CD4-positive, alpha-beta T cell (primary cell): ENCODE measurements at regions of chr16 and their contacts with region 1.

Region 1: GRCh38 chr16:23452572-23453337 is at the start of gene COG7:
- DNase-seq: peak; percentile 74 to 88 (median 78)
- ATAC-seq: peak; percentile 89
- H3K4me3 ChIP-seq: peak within 1 kb of the TSS; percentile 93
- H3K4me3 Mint-ChIP-seq: peak within 1 kb of the TSS; percentile 94
- H3K27ac ChIP-seq: peak within 1 kb of the TSS in 1 of 2 donors; percentile 13
- H3K27ac Mint-ChIP-seq: peak within 1 kb of the TSS; percentile 79
- H3K4me1 ChIP-seq: peaks cover 15% of the 10 kb centered on the region
- H3K4me1 Mint-ChIP-seq: peaks cover 40% of the 10 kb centered on the region
- H3K27me3 ChIP-seq: no peaks in the 10 kb centered on the region
- H3K27me3 Mint-ChIP-seq: no peaks in the 10 kb centered on the region
- CTCF ChIP-seq: no peak
- total RNA-seq, gene COG7: 12.6 to 13.6 TPM

Region 2: DNA sequence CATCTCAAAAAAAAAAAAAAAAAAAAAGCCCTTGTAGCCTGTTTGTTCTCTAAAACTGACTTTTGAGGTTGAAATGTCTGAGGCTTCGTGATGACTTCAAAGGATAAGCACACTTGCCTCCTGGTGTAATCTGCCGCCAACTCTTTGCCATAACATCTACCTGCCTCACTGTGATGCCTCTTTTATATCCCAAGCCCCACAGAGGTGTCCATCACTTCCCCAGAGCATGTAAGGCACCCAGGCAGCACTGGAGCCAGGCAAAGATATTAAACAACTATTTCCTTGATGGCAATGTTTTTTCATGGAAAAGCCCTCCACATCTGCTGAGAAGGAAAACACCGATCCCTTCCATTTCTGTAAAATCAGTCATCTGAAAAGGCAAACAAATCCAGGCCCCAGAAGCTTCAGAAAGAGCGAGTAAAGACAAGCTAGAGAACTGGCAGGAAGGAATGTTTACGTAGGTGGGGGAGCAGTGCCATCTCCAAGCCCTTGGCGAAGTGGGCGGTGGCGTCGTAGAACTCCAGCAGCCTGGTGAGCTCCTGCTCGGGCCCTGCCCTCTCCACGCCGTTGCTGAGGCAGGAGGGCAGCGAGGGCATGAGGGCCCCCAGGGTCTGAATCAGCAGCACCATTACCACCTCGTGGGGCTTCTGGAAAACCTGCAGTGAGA is 28.3 kb before region 1 on chr16:
- CTCF ChIA-PET with region 1: no interaction called
- POLR2A ChIA-PET with region 1: no interaction called
- intact Hi-C with region 1: no loop called
- DNase-seq: no peak
- ATAC-seq: no peak
- H3K4me3 ChIP-seq: no peak overlapping the region
- H3K4me3 Mint-ChIP-seq: no peak overlapping the region
- H3K27ac ChIP-seq: no peak overlapping the region
- H3K27ac Mint-ChIP-seq: no peak overlapping the region
- H3K4me1 ChIP-seq: no peaks in the 10 kb centered on the region
- H3K4me1 Mint-ChIP-seq: no peaks in the 10 kb centered on the region
- H3K27me3 ChIP-seq: no peaks in the 10 kb centered on the region
- H3K27me3 Mint-ChIP-seq: no peaks in the 10 kb centered on the region
- CTCF ChIP-seq: no peak

Region 3: GRCh38 chr16:23504451-23505179 is 51.9 kb after region 1 on chr16:
- CTCF ChIA-PET with region 1: no interaction called
- POLR2A ChIA-PET with region 1: no interaction called
- intact Hi-C with region 1: loop called (anchors 5 to 10 kb)
- DNase-seq: peak; percentile 23 to 84 (median 49)
- ATAC-seq: peak; percentile 80
- H3K4me3 ChIP-seq: no peak overlapping the region
- H3K4me3 Mint-ChIP-seq: peak overlapping the region; percentile 70
- H3K27ac ChIP-seq: peak overlapping the region; percentile 26 to 40
- H3K27ac Mint-ChIP-seq: peak overlapping the region; percentile 79
- H3K4me1 ChIP-seq: peaks cover 65% of the 10 kb centered on the region
- H3K4me1 Mint-ChIP-seq: peaks cover 88% of the 10 kb centered on the region
- H3K27me3 ChIP-seq: no peaks in the 10 kb centered on the region
- H3K27me3 Mint-ChIP-seq: no peaks in the 10 kb centered on the region
- CTCF ChIP-seq: no peak

Region 4: GRCh38 chr16:23595951-23596720 is 143.4 kb after region 1 on chr16 and contains the start of gene NDUFAB1:
- CTCF ChIA-PET with region 1: interaction called, 3 read pairs
- POLR2A ChIA-PET with region 1: no interaction called
- intact Hi-C with region 1: loop called in 1 of 2 experiments (anchors 2 kb)
- DNase-seq: peak; percentile 81 to 95 (median 90)
- ATAC-seq: peak; percentile 99
- H3K4me3 ChIP-seq: peak within 1 kb of the TSS; percentile 76
- H3K4me3 Mint-ChIP-seq: peak within 1 kb of the TSS; percentile 87
- H3K27ac ChIP-seq: peak within 1 kb of the TSS; percentile 54 to 59
- H3K27ac Mint-ChIP-seq: peak within 1 kb of the TSS; percentile 73
- H3K4me1 ChIP-seq: peaks cover 33% of the 10 kb centered on the region
- H3K4me1 Mint-ChIP-seq: peaks cover 35% of the 10 kb centered on the region
- H3K27me3 ChIP-seq: no peaks in the 10 kb centered on the region
- H3K27me3 Mint-ChIP-seq: no peaks in the 10 kb centered on the region
- CTCF ChIP-seq: peak; percentile 99
- total RNA-seq, gene NDUFAB1: 23.0 to 28.3 TPM

Region 5: GRCh38 chr16:23640931-23641765 is 188.4 kb after region 1 on chr16 and contains the starts of genes DCTN5 and PALB2:
- CTCF ChIA-PET with region 1: no interaction called
- POLR2A ChIA-PET with region 1: no interaction called
- intact Hi-C with region 1: loop called in 1 of 2 experiments (anchors 5 kb)
- DNase-seq: peak; percentile 61 to 93 (median 78)
- ATAC-seq: peak; percentile 90
- H3K4me3 ChIP-seq: peak within 1 kb of the TSS; percentile 93
- H3K4me3 Mint-ChIP-seq: peak within 1 kb of the TSS; percentile 99
- H3K27ac ChIP-seq: peak within 1 kb of the TSS; percentile 70 to 75
- H3K27ac Mint-ChIP-seq: peak within 1 kb of the TSS; percentile 96
- H3K4me1 ChIP-seq: peaks cover 21% of the 10 kb centered on the region
- H3K4me1 Mint-ChIP-seq: peaks cover 40% of the 10 kb centered on the region
- H3K27me3 ChIP-seq: no peaks in the 10 kb centered on the region
- H3K27me3 Mint-ChIP-seq: no peaks in the 10 kb centered on the region
- CTCF ChIP-seq: no peak
- total RNA-seq, gene DCTN5: 46.9 to 47.8 TPM
- total RNA-seq, gene PALB2: 3.8 to 5.1 TPM

Region 6: DNA sequence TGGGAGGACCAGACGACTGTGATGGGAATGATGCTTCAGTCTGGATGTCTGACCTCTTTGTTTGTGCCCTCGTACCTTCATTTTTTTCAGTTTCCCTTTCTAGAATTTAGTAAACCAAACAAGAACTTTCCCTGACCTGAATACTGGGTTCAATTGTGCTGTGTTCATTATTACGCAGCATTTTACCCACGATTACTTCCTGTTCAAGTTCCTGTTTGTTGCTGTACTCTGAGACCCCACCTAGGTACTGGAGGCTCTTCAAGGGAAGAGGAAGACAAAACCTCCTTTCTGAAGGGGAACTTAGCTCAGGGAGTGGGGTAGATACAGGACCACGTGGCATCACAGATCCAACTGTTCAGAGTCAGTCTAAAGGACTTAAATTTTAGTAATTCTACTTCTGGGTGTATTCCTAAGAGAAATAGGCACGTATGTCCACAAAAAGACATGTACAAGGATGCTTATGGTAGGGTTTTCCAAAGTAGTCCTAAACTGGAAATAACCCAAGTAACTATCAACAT is 373.8 kb after region 1 on chr16:
- CTCF ChIA-PET with region 1: no interaction called
- POLR2A ChIA-PET with region 1: no interaction called
- intact Hi-C with region 1: no loop called
- DNase-seq: peak in 5 of 14 experiments; percentile 20 to 89 (median 75)
- ATAC-seq: peak; percentile 88
- H3K4me3 ChIP-seq: peak overlapping the region; percentile 6
- H3K4me3 Mint-ChIP-seq: peak overlapping the region; percentile 80
- H3K27ac ChIP-seq: peak overlapping the region; percentile 32 to 75
- H3K27ac Mint-ChIP-seq: peak overlapping the region; percentile 89
- H3K4me1 ChIP-seq: peaks cover 27% of the 10 kb centered on the region
- H3K4me1 Mint-ChIP-seq: peaks cover 40% of the 10 kb centered on the region
- H3K27me3 ChIP-seq: no peaks in the 10 kb centered on the region
- H3K27me3 Mint-ChIP-seq: no peaks in the 10 kb centered on the region
- CTCF ChIP-seq: no peak